WTC11 (cell line): ENCODE measurements at regions of chr22 and their contacts with region 1.

Region 1: DNA sequence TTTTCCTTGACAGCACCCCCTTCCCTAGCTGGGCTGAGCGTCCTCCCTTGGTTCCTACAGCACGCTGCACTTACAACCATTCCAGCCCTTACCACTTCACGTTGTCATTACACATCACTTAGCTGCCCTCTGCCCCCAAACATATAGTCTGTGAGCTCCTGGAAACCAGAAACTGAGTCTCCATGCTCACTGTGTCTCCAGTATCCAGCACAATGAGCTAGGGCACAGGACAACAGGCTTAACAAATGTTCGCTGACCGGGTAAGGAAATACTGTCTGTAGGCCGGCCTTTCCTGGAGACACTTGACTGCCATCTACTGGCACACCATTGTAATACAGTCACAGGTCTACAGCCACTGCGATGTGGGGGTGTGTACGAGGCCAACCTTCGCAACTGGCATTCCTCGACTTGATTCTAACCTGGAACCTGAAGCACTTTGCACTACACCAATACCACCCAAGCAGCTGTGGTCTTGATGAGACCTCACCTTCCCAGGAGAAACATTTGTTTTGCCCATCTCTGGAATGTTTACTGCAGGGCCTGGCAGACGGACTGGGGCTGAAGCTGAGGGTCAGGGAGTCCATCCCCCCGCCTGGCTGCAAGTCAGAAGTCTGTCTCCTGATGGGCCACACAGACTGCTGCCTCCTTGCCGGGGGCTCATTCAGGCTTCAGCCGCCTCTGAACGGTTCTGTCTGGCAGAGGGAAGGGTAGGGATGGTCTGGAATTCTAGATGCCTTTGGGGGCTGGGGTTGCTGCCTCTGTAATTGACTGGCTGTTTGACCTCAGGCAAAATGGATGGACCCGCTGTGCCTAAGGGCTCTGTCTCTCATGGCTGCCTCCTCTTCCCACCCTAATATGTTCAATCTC is 72.0 kb downstream of the SYN3 start:
- DNase-seq: peak; percentile 81
- ATAC-seq: peak; percentile 95
- H3K4me3 Mint-ChIP-seq: no peak overlapping the region
- H3K27ac Mint-ChIP-seq: peak overlapping the region; percentile 75
- H3K4me1 Mint-ChIP-seq: peaks cover 23% of the 10 kb centered on the region
- H3K27me3 Mint-ChIP-seq: no peaks in the 10 kb centered on the region
- CTCF ChIP-seq: peak; percentile 66

Region 2: DNA sequence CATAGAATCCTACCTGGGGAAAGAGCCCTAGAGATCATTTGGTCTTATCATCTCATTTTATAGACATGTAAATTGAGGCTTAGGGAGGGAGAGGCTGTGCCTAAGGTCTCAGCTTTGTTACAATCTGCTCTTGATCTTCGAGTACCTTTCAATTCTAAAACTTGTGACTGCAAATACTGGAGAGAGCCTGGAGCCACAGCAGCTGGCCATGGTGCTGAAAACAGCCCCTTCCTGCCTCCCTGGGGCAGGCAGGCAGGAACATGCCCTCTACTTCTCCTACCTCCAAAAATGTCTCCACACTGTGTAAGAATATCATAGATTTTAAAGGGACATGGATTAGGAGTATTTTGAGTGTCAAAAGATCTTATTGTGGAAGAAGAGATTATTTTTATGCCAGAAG is 879.2 kb before region 1 on chr22:
- CTCF ChIA-PET with region 1: no interaction called
- POLR2A ChIA-PET with region 1: no interaction called
- DNase-seq: peak; percentile 68
- ATAC-seq: peak; percentile 64; the same call in 1 of the 2 replicates
- H3K4me3 Mint-ChIP-seq: no peak overlapping the region
- H3K27ac Mint-ChIP-seq: no peak overlapping the region
- H3K4me1 Mint-ChIP-seq: no peaks in the 10 kb centered on the region
- H3K27me3 Mint-ChIP-seq: peaks cover 4% of the 10 kb centered on the region
- CTCF ChIP-seq: no peak

Region 3: GRCh38 chr22:32528984-32529982 is 456.8 kb before region 1 on chr22:
- CTCF ChIA-PET with region 1: interaction called, 15 read pairs
- POLR2A ChIA-PET with region 1: no interaction called
- DNase-seq: peak; percentile 88
- ATAC-seq: peak; percentile 25
- H3K4me3 Mint-ChIP-seq: no peak overlapping the region
- H3K27ac Mint-ChIP-seq: no peak overlapping the region
- H3K4me1 Mint-ChIP-seq: peaks cover 7% of the 10 kb centered on the region
- H3K27me3 Mint-ChIP-seq: no peaks in the 10 kb centered on the region
- CTCF ChIP-seq: peak; percentile 71; the same call in 1 of the 2 replicates

Region 4: GRCh38 chr22:32775957-32776356 is 210.2 kb before region 1 on chr22:
- CTCF ChIA-PET with region 1: interaction called, 14 read pairs
- POLR2A ChIA-PET with region 1: no interaction called
- DNase-seq: no peak
- ATAC-seq: peak; percentile 77
- H3K4me3 Mint-ChIP-seq: no peak overlapping the region
- H3K27ac Mint-ChIP-seq: no peak overlapping the region
- H3K4me1 Mint-ChIP-seq: peaks cover 13% of the 10 kb centered on the region
- H3K27me3 Mint-ChIP-seq: peaks cover 5% of the 10 kb centered on the region; the same call in 1 of the 2 replicates
- CTCF ChIP-seq: no peak

Region 5: GRCh38 chr22:33000342-33001280 is 14.5 kb after region 1 on chr22:
- CTCF ChIA-PET with region 1: interaction called, 26 read pairs
- POLR2A ChIA-PET with region 1: no interaction called
- DNase-seq: peak; percentile 89
- ATAC-seq: peak; percentile 98
- H3K4me3 Mint-ChIP-seq: no peak overlapping the region
- H3K27ac Mint-ChIP-seq: peak overlapping the region; percentile 58; the same call in 1 of the 2 replicates
- H3K4me1 Mint-ChIP-seq: peaks cover 28% of the 10 kb centered on the region
- H3K27me3 Mint-ChIP-seq: no peaks in the 10 kb centered on the region
- CTCF ChIP-seq: peak; percentile 71; the same call in 1 of the 2 replicates

Region 6: DNA sequence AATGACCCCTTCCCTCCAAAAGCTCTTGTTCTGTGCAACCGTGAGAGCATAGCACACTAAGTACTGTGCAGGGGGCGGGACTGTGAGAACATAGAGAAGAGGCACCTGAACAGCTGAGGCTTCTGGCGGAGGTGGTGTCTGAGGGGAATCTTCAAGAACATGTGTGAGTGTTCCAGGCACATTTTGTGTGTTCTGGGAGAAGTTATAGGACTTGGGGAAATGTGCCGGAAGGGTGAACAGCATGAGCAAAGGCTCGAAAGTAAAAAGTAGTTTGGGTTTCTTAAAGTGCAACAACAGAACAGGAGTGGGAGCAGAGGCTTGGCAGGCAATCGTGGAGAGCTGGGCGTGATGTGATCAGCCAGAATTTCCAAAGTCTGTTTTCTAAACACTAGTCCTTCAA is 84.5 kb after region 1 on chr22:
- CTCF ChIA-PET with region 1: no interaction called
- POLR2A ChIA-PET with region 1: no interaction called
- DNase-seq: no peak
- ATAC-seq: no peak
- H3K4me3 Mint-ChIP-seq: no peak overlapping the region
- H3K27ac Mint-ChIP-seq: no peak overlapping the region
- H3K4me1 Mint-ChIP-seq: peaks cover 9% of the 10 kb centered on the region
- H3K27me3 Mint-ChIP-seq: peaks cover 43% of the 10 kb centered on the region
- CTCF ChIP-seq: no peak